ENCODE measurements at regions of chr7 and their contacts with region 1.

Region 1: GRCh38 chr7:41984888-41985287 is 252.1 kb downstream of the GLI3 start:
- DNase-seq: no peak
- H3K4me3 ChIP-seq: no peak overlapping the region
- H3K27ac ChIP-seq: no peak overlapping the region
- H3K27me3 ChIP-seq: no peaks in the 10 kb centered on the region
- CTCF ChIP-seq: no peak

Region 2: GRCh38 chr7:42831718-42832431 is 847.0 kb after region 1 on chr7:
- CTCF ChIA-PET with region 1: no interaction called
- POLR2A ChIA-PET with region 1: interaction called, 12 read pairs
- DNase-seq: no peak
- H3K4me3 ChIP-seq: no peak overlapping the region
- H3K27ac ChIP-seq: no peak overlapping the region
- H3K27me3 ChIP-seq: peaks cover 3% of the 10 kb centered on the region
- CTCF ChIP-seq: peak; percentile 75

Measured in AG04450 (cell line).